Mammary epithelial cell (primary cell): ENCODE measurements at regions of chr12 and their contacts with region 1.

Region 1: DNA sequence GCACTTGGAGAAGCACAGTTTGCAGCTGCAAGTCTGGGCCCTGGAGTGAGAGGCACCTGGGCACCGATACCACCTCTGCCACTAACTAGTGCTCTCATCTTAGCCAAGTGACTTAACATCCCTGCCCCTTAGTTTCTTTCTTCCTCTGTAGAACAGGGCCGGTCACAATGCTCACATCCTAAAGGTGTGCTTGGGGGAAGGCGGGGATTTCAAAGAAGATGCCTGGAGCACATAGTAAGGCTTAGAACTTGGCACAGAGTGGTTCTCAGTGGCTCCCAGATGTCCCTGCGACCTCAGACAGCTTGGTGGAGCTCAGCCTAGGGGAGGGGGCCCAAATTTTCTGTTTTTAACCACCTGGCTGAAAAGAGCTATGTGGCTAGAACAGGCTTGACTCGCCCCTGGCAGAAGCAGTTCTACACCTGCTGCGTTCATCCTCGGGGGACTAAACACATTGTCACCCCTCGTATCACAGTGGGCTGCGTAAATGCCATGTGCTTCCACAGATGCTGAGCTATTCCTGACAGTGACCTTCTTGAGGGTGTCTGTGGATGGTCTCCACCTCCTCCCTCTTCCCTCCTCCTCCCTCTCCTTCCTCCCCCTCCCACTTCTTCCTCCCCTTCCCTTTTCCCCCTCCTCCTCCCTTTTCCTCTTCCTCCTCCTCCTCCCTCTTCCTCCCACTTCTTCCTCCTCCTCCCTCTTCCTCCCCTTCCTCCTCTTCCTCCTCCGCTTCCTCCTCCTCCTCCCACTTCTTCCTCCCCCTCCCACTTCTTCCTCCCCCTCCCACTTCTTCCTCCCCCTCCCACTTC is 112.1 kb downstream of the PHETA1 start:
- DNase-seq: no peak
- H3K4me3 ChIP-seq: no peak overlapping the region
- H3K27ac ChIP-seq: no peak overlapping the region
- H3K4me1 ChIP-seq: no peaks in the 10 kb centered on the region
- H3K27me3 ChIP-seq: no peaks in the 10 kb centered on the region
- CTCF ChIP-seq: no peak

Region 2: GRCh38 chr12:110966081-110966760 is 290.6 kb before region 1 on chr12:
- CTCF ChIA-PET with region 1: no interaction called
- dilution Hi-C with region 1: loop called (anchors 10 kb)
- in situ Hi-C with region 1: no loop called
- intact Hi-C with region 1: no loop called
- DNase-seq: no peak
- H3K4me3 ChIP-seq: no peak overlapping the region
- H3K27ac ChIP-seq: no peak overlapping the region
- H3K4me1 ChIP-seq: no peaks in the 10 kb centered on the region
- H3K27me3 ChIP-seq: no peaks in the 10 kb centered on the region
- CTCF ChIP-seq: no peak

Region 3: GRCh38 chr12:111503116-111503515 is 246.3 kb after region 1 on chr12:
- CTCF ChIA-PET with region 1: no interaction called
- dilution Hi-C with region 1: no loop called
- in situ Hi-C with region 1: no loop called
- intact Hi-C with region 1: no loop called
- DNase-seq: no peak
- H3K4me3 ChIP-seq: no peak overlapping the region
- H3K27ac ChIP-seq: no peak overlapping the region
- H3K4me1 ChIP-seq: no peaks in the 10 kb centered on the region
- H3K27me3 ChIP-seq: no peaks in the 10 kb centered on the region
- CTCF ChIP-seq: no peak